ENCODE measurements at regions of chr3 and their contacts with region 1.

Region 1: GRCh38 chr3:12484198-12484974 is at the start of gene TSEN2:
- DNase-seq: peak; percentile 95
- H3K4me3 ChIP-seq: peak within 1 kb of the TSS; percentile 63 to 77 (median 70)
- H3K27ac ChIP-seq: peak within 1 kb of the TSS; percentile 72 to 82 (median 77)
- H3K4me1 ChIP-seq: peaks cover 16 to 38% (median 21%) of the 10 kb centered on the region in 4 donors
- H3K27me3 ChIP-seq: no peaks in the 10 kb centered on the region
- CTCF ChIP-seq: peak; percentile 16 to 61 (median 28)
- EP300 ChIP-seq: no peak
- POLR2A ChIP-seq: peak; percentile 46
- total RNA-seq, gene TSEN2: 17.6 to 20.4 (median 19.4) TPM

Region 2: GRCh38 chr3:12135029-12135657 is 349.2 kb before region 1 on chr3:
- intact Hi-C with region 1: loop called (anchors 2 kb)
- DNase-seq: no peak
- H3K4me3 ChIP-seq: no peak overlapping the region
- H3K27ac ChIP-seq: no peak overlapping the region
- H3K4me1 ChIP-seq: peaks cover 4 to 20% (median 12%) of the 10 kb centered on the region in 4 donors
- H3K27me3 ChIP-seq: peaks cover 0 to 3% (median 0%) of the 10 kb centered on the region in 4 donors
- CTCF ChIP-seq: peak; percentile 82
- EP300 ChIP-seq: no peak
- POLR2A ChIP-seq: no peak

Region 3: GRCh38 chr3:12287727-12288191 is 196.6 kb before region 1 on chr3:
- intact Hi-C with region 1: loop called (anchors 10 kb)
- DNase-seq: no peak
- H3K4me3 ChIP-seq: peak overlapping the region; percentile 57 to 69 (median 65)
- H3K27ac ChIP-seq: peak overlapping the region; percentile 67 to 79 (median 74)
- H3K4me1 ChIP-seq: peaks cover 5 to 20% (median 17%) of the 10 kb centered on the region in 4 donors
- H3K27me3 ChIP-seq: peaks cover 0 to 42% (median 4%) of the 10 kb centered on the region in 4 donors
- CTCF ChIP-seq: no peak
- EP300 ChIP-seq: no peak
- POLR2A ChIP-seq: no peak

Region 4: DNA sequence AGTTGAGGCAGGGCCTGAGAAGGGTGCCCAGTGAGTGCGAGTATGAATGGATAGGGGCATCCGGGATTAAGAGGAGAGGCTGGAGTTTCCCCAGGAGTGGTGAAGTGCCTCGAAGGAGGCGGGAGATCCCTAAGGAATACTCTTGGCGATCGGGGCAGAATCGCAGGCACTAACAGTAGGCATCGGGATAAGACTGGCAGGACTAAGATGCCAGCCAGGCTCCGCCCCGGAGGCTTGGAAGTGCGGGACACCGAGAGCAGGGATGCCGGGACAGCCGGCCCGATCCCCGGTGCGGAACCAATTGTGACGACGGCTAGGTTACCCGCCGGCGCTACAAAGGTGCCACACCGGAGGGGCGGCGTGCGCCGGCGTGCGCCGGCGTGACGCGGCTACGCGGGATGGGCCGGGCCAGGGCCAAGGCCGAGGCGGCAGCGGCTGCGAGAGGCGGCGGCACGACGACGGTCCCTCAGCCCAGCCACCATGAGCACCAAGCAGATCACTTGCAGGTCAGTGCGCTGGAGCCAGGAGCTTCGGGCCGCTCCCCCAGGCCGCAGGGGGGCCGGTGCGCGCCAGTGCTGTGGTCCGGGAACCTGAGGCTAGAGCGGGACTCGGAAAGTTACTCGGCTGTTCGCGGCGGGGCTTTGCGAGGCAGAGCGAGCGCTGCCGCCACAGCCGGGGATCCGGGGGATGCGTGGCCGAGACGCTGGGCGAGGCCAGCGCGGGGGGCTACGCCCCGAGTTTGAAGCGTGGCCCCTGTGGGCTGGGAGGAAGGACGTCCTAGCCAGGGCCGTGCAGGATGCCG is 72.5 kb after region 1 on chr3 and contains the start of gene MKRN2:
- intact Hi-C with region 1: loop called (anchors 2 kb)
- DNase-seq: peak; percentile 95
- H3K4me3 ChIP-seq: peak within 1 kb of the TSS; percentile 76 to 92 (median 89)
- H3K27ac ChIP-seq: peak within 1 kb of the TSS; percentile 93 to 98 (median 96)
- H3K4me1 ChIP-seq: peaks cover 47 to 60% (median 57%) of the 10 kb centered on the region in 4 donors
- H3K27me3 ChIP-seq: peaks cover 0 to 30% (median 8%) of the 10 kb centered on the region in 4 donors
- CTCF ChIP-seq: peak in 1 of 3 experiments; percentile 23
- EP300 ChIP-seq: no peak
- POLR2A ChIP-seq: peak; percentile 95
- total RNA-seq, gene MKRN2: 29.5 to 55.1 (median 38.0) TPM

Region 5: GRCh38 chr3:12663936-12664908 is 179.8 kb after region 1 on chr3 and contains the start of gene RAF1:
- intact Hi-C with region 1: loop called (anchors 10 kb)
- DNase-seq: peak; percentile 99
- H3K4me3 ChIP-seq: peak within 1 kb of the TSS; percentile 87 to 100 (median 96)
- H3K27ac ChIP-seq: peak within 1 kb of the TSS; percentile 99 to 100 (median 100)
- H3K4me1 ChIP-seq: peaks cover 29 to 44% (median 43%) of the 10 kb centered on the region in 4 donors
- H3K27me3 ChIP-seq: no peaks in the 10 kb centered on the region
- CTCF ChIP-seq: peak in 2 of 3 experiments; percentile 6 to 20
- EP300 ChIP-seq: no peak
- POLR2A ChIP-seq: peak; percentile 32
- total RNA-seq, gene RAF1: 113 to 153 (median 116) TPM

Region 6: DNA sequence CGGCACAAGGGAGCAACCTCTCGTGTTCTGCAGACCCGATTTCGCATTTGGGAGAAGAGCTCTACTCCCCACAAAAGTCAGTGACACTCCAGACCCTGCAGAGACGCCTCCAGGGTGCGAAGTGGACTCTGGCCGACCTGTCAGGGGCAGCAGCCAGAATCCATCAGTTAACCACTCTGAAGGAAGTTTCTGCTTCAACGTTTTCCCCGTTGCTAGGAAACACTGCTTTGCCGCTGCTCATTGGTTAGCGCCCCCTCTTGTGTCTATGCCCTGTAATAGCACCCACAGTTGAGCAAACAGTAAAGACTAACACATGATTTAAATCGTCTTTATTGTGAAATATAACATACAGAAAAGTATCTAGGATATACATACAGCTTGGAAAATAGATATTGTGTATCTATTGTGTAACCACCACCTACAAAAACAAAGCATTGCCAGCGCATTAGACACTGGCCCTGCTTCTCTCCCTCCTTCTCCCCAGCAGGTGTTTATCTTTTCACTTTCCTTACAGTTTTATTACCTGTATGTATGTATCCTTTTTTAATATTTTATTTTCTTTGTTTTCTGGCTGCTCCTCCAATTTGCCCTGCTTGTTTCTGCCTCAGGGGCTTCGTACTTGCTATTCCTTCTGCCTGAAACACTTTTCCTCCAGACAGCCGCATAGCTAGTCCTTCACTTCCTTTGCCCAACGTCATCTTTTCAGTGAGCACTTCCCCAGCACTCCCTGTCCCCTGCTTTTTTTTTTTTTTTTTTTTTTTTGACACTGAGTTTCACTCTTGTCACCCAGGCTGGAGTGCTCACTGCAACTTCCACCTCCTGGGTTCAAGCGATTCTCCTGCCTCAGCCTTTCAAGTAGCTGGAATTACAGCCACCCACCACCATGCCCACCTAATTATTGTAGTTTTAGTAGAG is 235.9 kb after region 1 on chr3:
- intact Hi-C with region 1: loop called (anchors 10 kb)
- DNase-seq: peak; percentile 93
- H3K4me3 ChIP-seq: peak overlapping the region; percentile 40 to 59 (median 44)
- H3K27ac ChIP-seq: peak overlapping the region in 1 of 4 donors; percentile 53
- H3K4me1 ChIP-seq: peaks cover 9 to 13% (median 11%) of the 10 kb centered on the region in 4 donors
- H3K27me3 ChIP-seq: no peaks in the 10 kb centered on the region
- CTCF ChIP-seq: peak; percentile 92 to 95 (median 95)
- EP300 ChIP-seq: no peak
- POLR2A ChIP-seq: no peak